ENCODE measurements at regions of chr21 and their contacts with region 1.

Region 1: GRCh38 chr21:33075596-33076195 is 5.8 kb downstream of the OLIG1 start:
- DNase-seq: no peak
- ATAC-seq: no peak
- H3K4me3 ChIP-seq: no peak overlapping the region
- H3K4me3 Mint-ChIP-seq: no peak overlapping the region
- H3K27ac ChIP-seq: no peak overlapping the region
- H3K27ac Mint-ChIP-seq: no peak overlapping the region
- H3K4me1 ChIP-seq: peaks cover 4 to 13% of the 10 kb centered on the region in 2 experiments
- H3K4me1 Mint-ChIP-seq: peaks cover 0 to 24% (median 15%) of the 10 kb centered on the region in 3 donors
- H3K27me3 ChIP-seq: peaks cover 2 to 43% of the 10 kb centered on the region in 2 experiments
- H3K27me3 Mint-ChIP-seq: peaks cover 49 to 63% of the 10 kb centered on the region in 2 donors

Region 2: DNA sequence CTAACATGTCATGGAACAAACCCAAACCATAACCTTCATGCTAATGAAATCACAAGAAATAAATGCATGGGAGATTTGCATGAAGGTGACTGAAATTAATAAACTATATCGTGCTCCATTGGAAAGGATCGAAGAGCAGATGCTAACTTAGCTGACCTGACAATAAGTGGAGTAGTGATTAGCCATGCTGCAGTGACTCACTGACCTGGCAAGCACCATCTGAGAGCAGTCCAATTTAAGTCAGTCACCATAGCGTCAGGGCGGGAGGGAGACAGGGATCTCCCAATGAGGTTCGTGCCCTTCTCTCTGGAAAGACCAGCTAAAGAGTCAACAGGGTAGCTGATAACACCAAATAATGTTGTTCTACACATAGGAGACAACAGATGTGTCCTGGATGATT is 28.5 kb before region 1 on chr21:
- CTCF ChIA-PET with region 1: no interaction called
- POLR2A ChIA-PET with region 1: interaction called in 1 of 2 experiments, 12 read pairs
- DNase-seq: no peak
- ATAC-seq: no peak
- H3K4me3 ChIP-seq: no peak overlapping the region
- H3K4me3 Mint-ChIP-seq: no peak overlapping the region
- H3K27ac ChIP-seq: no peak overlapping the region
- H3K27ac Mint-ChIP-seq: no peak overlapping the region
- H3K4me1 ChIP-seq: no peaks in the 10 kb centered on the region
- H3K4me1 Mint-ChIP-seq: no peaks in the 10 kb centered on the region
- H3K27me3 ChIP-seq: peaks cover 0 to 23% of the 10 kb centered on the region in 2 experiments
- H3K27me3 Mint-ChIP-seq: peaks cover 43 to 44% of the 10 kb centered on the region in 2 donors

Region 3: GRCh38 chr21:33109574-33110339 is 34.1 kb after region 1 on chr21:
- CTCF ChIA-PET with region 1: no interaction called
- POLR2A ChIA-PET with region 1: no interaction called
- DNase-seq: peak in 11 of 35 experiments; percentile 3 to 32 (median 12)
- ATAC-seq: peak in 3 of 4 experiments; percentile 61 to 67 (median 63)
- H3K4me3 ChIP-seq: peak overlapping the region in 1 of 2 donors; percentile 41
- H3K4me3 Mint-ChIP-seq: peak overlapping the region in 2 of 3 donors; percentile 31 to 53
- H3K27ac ChIP-seq: no peak overlapping the region
- H3K27ac Mint-ChIP-seq: no peak overlapping the region
- H3K4me1 ChIP-seq: peaks cover 3 to 13% of the 10 kb centered on the region in 2 experiments
- H3K4me1 Mint-ChIP-seq: peaks cover 6 to 8% (median 7%) of the 10 kb centered on the region in 3 donors
- H3K27me3 ChIP-seq: peaks cover 0 to 33% of the 10 kb centered on the region in 2 experiments
- H3K27me3 Mint-ChIP-seq: peaks cover 26 to 58% of the 10 kb centered on the region in 2 donors

Region 4: DNA sequence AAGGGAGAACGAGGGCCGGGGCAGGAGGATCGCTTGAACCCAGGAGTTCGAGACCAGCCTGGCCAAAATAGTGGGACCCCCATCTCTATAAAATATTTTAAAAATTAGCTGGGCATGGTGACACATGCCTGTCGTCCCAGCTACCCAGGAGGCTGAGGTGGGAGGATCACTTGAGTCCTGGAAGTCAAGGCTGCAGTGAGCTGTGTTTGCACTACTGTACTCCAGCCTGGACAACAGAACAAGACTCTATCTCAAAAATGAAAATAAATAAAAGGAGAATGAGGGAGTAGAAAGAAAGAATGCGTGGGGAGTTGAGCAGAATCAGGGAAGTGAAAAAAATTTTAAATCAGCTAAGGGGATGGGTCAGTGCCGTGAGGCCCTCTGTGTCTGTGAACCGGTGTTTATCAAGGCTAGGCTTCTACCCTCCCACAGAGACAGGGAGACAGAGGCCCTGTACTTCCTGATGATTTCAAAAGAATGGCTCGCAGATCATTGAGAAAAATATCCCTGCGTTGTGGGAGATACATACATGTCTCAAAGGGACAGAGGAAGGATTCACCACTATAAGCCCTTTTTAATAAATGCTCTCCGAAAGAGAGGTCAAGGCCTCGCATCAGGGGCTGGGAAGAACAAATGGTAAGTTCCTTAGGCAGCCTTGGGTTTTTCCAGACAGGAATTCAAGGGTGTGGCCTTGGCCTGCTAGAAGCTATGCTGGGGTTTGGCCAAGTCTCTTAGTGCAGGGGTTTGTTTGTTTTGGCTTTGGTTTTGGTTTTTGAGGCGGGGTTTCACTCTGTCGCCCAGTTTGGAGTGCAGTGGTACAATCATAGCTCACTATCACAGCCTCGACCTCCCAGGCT is 211.1 kb after region 1 on chr21:
- CTCF ChIA-PET with region 1: no interaction called
- POLR2A ChIA-PET with region 1: no interaction called
- DNase-seq: no peak
- ATAC-seq: no peak
- H3K4me3 ChIP-seq: no peak overlapping the region
- H3K4me3 Mint-ChIP-seq: no peak overlapping the region
- H3K27ac ChIP-seq: no peak overlapping the region
- H3K27ac Mint-ChIP-seq: peak overlapping the region in 1 of 2 donors; percentile 52
- H3K4me1 ChIP-seq: peaks cover 0 to 4% of the 10 kb centered on the region in 2 experiments
- H3K4me1 Mint-ChIP-seq: peaks cover 8 to 14% (median 10%) of the 10 kb centered on the region in 3 donors
- H3K27me3 ChIP-seq: no peaks in the 10 kb centered on the region
- H3K27me3 Mint-ChIP-seq: no peaks in the 10 kb centered on the region